Activated CD8-positive, alpha-beta T cell treated with anti-CD3 and anti-CD28 coated beads for 36 hours (primary cell): ENCODE measurements at regions of chr19 and their contacts with region 1.

Region 1: GRCh38 chr19:51422053-51422448 is 4.6 kb upstream of the SIGLEC10 start:
- DNase-seq: peak; percentile 93
- ATAC-seq: peak; percentile 78
- H3K4me3 Mint-ChIP-seq: no peak overlapping the region
- H3K27ac Mint-ChIP-seq: no peak overlapping the region
- H3K4me1 Mint-ChIP-seq: peaks cover 22% of the 10 kb centered on the region
- H3K27me3 Mint-ChIP-seq: peaks cover 20% of the 10 kb centered on the region
- CTCF ChIP-seq: peak; percentile 100

Region 2: DNA sequence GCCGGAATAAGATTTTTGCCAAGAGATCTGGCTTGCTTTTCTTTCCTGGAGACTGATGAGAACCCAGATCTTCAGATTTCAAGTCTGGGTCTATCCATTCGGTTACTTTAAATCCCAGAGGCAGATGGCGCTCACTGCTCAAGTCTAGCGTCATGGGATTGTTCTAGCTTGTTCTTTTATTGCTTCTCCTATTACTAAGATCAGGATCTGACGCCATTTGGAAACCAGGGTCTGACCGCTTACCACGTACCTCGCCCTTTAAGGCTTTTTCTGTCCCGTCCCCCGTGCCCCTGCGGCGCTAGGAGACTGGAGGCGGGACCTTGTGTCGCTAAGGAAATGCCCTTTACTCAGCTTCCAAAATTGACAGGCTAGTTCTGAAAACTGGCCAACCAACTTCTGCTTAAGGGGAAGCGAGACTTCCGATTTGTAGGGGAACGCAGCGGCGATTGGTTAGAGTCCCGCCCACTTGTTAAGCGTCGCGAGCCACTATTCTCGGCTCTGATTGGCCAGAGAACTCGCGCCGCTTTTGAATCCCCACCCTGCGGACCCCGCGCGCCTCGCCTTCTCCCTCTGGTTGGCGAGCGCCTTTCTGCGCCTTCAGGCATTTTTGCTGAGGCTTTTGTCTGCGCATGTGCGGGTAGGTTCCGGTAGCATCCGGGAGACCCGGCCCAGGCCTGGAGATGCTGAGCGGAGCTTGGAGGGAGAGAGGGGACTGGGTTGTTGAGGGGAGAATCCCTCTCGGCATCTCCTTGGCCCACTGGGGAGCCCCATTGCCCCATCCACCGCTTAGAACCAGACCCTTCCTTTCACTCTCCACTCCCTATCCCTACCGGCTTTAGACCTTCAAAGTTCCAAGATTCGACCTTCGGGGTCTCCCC is 27.9 kb before region 1 on chr19:
- CTCF ChIA-PET with region 1: interaction called, 60 read pairs
- POLR2A ChIA-PET with region 1: interaction called, 10 read pairs
- intact Hi-C with region 1: no loop called
- DNase-seq: peak; percentile 99
- ATAC-seq: peak; percentile 86
- H3K4me3 Mint-ChIP-seq: peak overlapping the region; percentile 98
- H3K27ac Mint-ChIP-seq: peak overlapping the region; percentile 98
- H3K4me1 Mint-ChIP-seq: peaks cover 48% of the 10 kb centered on the region
- H3K27me3 Mint-ChIP-seq: no peaks in the 10 kb centered on the region
- CTCF ChIP-seq: peak; percentile 20

Region 3: GRCh38 chr19:51441410-51442390 is 19.6 kb after region 1 on chr19:
- CTCF ChIA-PET with region 1: interaction called, 71 read pairs
- POLR2A ChIA-PET with region 1: interaction called, 5 read pairs
- intact Hi-C with region 1: no loop called
- DNase-seq: peak; percentile 99
- ATAC-seq: peak; percentile 90
- H3K4me3 Mint-ChIP-seq: peak overlapping the region; percentile 74
- H3K27ac Mint-ChIP-seq: peak overlapping the region; percentile 94
- H3K4me1 Mint-ChIP-seq: peaks cover 61% of the 10 kb centered on the region
- H3K27me3 Mint-ChIP-seq: peaks cover 3% of the 10 kb centered on the region
- CTCF ChIP-seq: no peak

Region 4: GRCh38 chr19:51637362-51637978 is 215.4 kb after region 1 on chr19:
- CTCF ChIA-PET with region 1: interaction called, 11 read pairs
- POLR2A ChIA-PET with region 1: no interaction called
- intact Hi-C with region 1: no loop called
- DNase-seq: no peak
- ATAC-seq: no peak
- H3K4me3 Mint-ChIP-seq: no peak overlapping the region
- H3K27ac Mint-ChIP-seq: no peak overlapping the region
- H3K4me1 Mint-ChIP-seq: no peaks in the 10 kb centered on the region
- H3K27me3 Mint-ChIP-seq: peaks cover 26% of the 10 kb centered on the region
- CTCF ChIP-seq: peak; percentile 65

Region 5: DNA sequence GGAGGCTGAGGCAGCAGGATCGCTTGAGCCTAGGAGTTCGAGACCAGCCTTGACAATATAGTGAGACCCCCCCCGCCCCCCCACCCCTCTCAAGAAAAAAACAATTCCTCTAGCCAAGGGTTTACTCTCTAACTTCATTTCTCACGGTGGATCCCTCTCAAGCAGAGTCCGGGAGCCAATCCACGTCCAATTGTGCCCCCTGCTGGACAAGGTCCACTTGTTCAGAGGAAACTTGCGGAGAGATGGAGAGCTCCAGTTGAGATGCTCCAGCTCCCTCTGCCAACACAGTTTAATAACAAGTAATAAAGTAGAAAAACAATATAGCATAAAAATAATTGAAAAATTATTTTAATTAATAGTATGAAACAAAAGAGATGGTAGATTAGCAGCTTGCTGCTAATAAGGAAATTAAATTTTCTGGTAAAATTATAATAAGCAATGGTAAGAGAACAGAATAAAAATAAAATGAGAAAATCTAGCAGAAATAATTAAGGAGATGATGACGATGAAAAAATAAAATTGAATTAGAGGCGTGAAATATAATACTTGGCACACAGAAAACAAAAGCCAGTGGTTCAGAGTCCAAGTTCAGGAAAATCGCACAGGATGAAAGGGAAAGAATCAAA is 239.0 kb after region 1 on chr19:
- CTCF ChIA-PET with region 1: interaction called, 12 read pairs
- POLR2A ChIA-PET with region 1: no interaction called
- intact Hi-C with region 1: loop called (anchors 5 kb)
- DNase-seq: peak; percentile 86
- ATAC-seq: peak; percentile 74
- H3K4me3 Mint-ChIP-seq: no peak overlapping the region
- H3K27ac Mint-ChIP-seq: no peak overlapping the region
- H3K4me1 Mint-ChIP-seq: peaks cover 5% of the 10 kb centered on the region
- H3K27me3 Mint-ChIP-seq: peaks cover 32% of the 10 kb centered on the region
- CTCF ChIP-seq: peak; percentile 73